IMR-90 (cell line): ENCODE measurements at regions of chr1 and their contacts with region 1.

Region 1: DNA sequence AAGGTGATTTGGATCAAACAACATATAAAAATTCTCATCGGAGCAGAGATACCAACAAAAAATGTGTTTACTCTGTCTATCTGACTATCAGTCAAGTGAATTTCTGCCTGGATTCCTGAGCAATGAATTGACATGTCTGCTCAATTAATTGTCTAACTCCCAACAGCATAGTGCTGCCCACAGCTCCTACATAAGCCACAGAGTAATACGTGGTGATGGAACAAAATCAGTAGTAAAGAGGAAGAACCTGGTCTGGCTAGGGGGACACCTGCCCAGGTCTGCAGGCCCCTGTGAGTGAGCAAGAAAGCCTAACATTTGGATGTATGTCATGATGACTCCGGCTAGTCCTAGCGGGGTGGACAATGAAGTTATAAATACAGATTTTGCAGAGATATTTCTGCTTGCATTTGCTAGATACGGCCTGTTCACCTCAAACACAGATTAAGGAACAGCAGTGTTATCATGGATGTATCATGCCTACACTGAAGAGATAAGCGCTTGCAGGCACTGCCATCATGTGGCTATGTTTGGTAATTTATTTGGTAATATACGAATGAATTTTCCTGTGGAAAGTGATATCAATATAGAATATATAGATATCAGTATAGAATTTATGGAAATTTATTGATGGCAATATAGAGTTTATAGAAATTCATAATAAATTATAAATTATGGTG is 69.6 kb upstream of the LRRC8B start:
- DNase-seq: peak; percentile 44
- ATAC-seq: peak; percentile 88
- H3K4me3 ChIP-seq: no peak overlapping the region
- H3K27ac ChIP-seq: no peak overlapping the region
- H3K4me1 ChIP-seq: no peaks in the 10 kb centered on the region
- H3K27me3 ChIP-seq: no peaks in the 10 kb centered on the region
- CTCF ChIP-seq: peak; percentile 75
- POLR2A ChIP-seq: no peak
- RAD21 ChIP-seq: peak; percentile 80

Region 2: GRCh38 chr1:88608139-88608943 is 846.6 kb before region 1 on chr1:
- CTCF ChIA-PET with region 1: no interaction called
- POLR2A ChIA-PET with region 1: no interaction called
- dilution Hi-C with region 1: no loop called
- in situ Hi-C with region 1: no loop called
- intact Hi-C with region 1: loop called (anchors 10 kb)
- DNase-seq: peak; percentile 37
- ATAC-seq: peak; percentile 84
- H3K4me3 ChIP-seq: no peak overlapping the region
- H3K27ac ChIP-seq: no peak overlapping the region
- H3K4me1 ChIP-seq: no peaks in the 10 kb centered on the region
- H3K27me3 ChIP-seq: no peaks in the 10 kb centered on the region; the same call in 1 of the 2 replicates
- CTCF ChIP-seq: peak; percentile 57
- POLR2A ChIP-seq: no peak
- RAD21 ChIP-seq: peak; percentile 43; the same call in 1 of the 2 replicates

Region 3: GRCh38 chr1:88973520-88974137 is 481.4 kb before region 1 on chr1:
- CTCF ChIA-PET with region 1: interaction called, 3 read pairs
- POLR2A ChIA-PET with region 1: interaction called, 3 read pairs
- dilution Hi-C with region 1: no loop called
- in situ Hi-C with region 1: no loop called
- intact Hi-C with region 1: loop called (anchors 1 kb)
- DNase-seq: peak; percentile 54
- ATAC-seq: peak; percentile 77
- H3K4me3 ChIP-seq: no peak overlapping the region
- H3K27ac ChIP-seq: no peak overlapping the region
- H3K4me1 ChIP-seq: no peaks in the 10 kb centered on the region
- H3K27me3 ChIP-seq: no peaks in the 10 kb centered on the region
- CTCF ChIP-seq: peak; percentile 61
- POLR2A ChIP-seq: no peak
- RAD21 ChIP-seq: peak; percentile 63

Region 4: DNA sequence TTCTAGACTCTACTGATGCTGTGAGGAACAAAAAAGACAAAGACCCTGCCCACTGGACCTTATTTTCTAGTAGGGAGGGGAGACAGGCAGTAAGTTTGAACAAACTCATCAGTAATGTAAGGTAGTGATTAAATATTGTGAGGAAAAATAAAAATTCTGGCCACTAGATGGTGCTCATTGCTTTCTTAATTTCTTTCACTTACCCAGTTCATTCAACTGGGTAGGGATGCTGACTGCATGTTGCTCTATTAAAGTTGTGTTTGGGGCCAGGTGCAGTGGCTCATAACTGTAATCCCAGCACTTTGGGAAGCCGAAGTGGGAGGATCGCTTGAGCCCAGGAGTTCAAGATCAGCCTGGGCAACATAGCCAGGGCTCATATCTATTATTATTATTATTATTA is 456.3 kb before region 1 on chr1:
- CTCF ChIA-PET with region 1: interaction called, 4 read pairs
- POLR2A ChIA-PET with region 1: no interaction called
- dilution Hi-C with region 1: no loop called
- in situ Hi-C with region 1: no loop called
- intact Hi-C with region 1: loop called (anchors 1 kb)
- DNase-seq: peak; percentile 69
- ATAC-seq: peak; percentile 88
- H3K4me3 ChIP-seq: no peak overlapping the region
- H3K27ac ChIP-seq: no peak overlapping the region
- H3K4me1 ChIP-seq: peaks cover 2% of the 10 kb centered on the region; the same call in 1 of the 2 replicates
- H3K27me3 ChIP-seq: no peaks in the 10 kb centered on the region
- CTCF ChIP-seq: peak; percentile 63
- POLR2A ChIP-seq: no peak
- RAD21 ChIP-seq: peak; percentile 70

Region 5: GRCh38 chr1:89358287-89358893 is 96.6 kb before region 1 on chr1:
- CTCF ChIA-PET with region 1: no interaction called
- POLR2A ChIA-PET with region 1: no interaction called
- dilution Hi-C with region 1: no loop called
- in situ Hi-C with region 1: no loop called
- intact Hi-C with region 1: loop called (anchors 5 kb)
- DNase-seq: peak; percentile 65
- ATAC-seq: peak; percentile 96
- H3K4me3 ChIP-seq: no peak overlapping the region
- H3K27ac ChIP-seq: no peak overlapping the region
- H3K4me1 ChIP-seq: no peaks in the 10 kb centered on the region
- H3K27me3 ChIP-seq: peaks cover 2% of the 10 kb centered on the region; the same call in 1 of the 2 replicates
- CTCF ChIP-seq: peak; percentile 78
- POLR2A ChIP-seq: no peak
- RAD21 ChIP-seq: peak; percentile 74